Right cardiac atrium (tissue), 5 donors: ENCODE measurements at regions of chr11 and their contacts with region 1.

Region 1: DNA sequence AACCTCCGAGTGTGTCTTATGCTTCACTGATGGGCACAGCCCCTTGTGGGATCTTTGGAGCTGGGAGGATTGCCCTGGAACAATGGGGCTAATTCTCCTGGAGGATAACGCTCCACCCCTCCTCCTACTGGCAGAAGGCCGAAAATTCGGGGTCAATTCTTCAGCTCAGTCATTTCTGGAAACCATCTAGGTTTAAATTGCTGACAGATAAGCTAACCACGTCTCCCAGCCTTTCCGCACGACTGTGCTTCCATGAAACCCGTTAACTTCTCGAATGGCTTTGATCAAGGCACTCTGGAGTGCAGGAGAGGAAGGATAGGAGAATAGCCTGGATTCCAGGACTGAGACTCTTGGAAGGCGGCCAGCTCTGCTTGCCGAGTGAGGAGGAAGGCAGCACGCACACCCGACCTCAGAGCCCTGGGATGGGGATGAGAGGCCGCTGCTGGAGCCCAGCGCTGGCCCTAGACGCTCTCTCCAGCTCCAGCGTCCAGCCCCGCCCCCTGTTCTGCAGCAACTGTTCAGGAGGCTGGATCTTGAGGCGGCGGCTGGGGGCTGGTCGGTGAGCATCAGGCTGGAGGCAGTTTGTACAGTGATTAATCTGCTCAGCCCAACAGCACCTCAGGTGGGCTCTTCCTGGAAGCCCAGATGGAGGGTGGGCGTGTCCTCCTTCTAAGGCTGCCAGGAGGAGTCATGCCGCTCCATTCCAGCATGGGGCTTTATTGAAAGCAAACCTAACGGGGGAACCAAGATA is 176.7 kb upstream of the NCAM1 start:
- DNase-seq: peak; percentile 86 to 96 (median 95)
- ATAC-seq: peak; percentile 81 to 89
- H3K4me3 ChIP-seq: no peak overlapping the region
- H3K27ac ChIP-seq: peak overlapping the region; percentile 53
- H3K4me1 ChIP-seq: peaks cover 16% of the 10 kb centered on the region
- H3K27me3 ChIP-seq: no peaks in the 10 kb centered on the region

Region 2: GRCh38 chr11:112655371-112655770 is 129.1 kb before region 1 on chr11:
- intact Hi-C with region 1: loop called in 1 of 4 experiments (anchors 10 kb)
- DNase-seq: peak; percentile 85 to 95 (median 92)
- ATAC-seq: peak; percentile 73 to 81
- H3K4me3 ChIP-seq: no peak overlapping the region
- H3K27ac ChIP-seq: peak overlapping the region; percentile 42
- H3K4me1 ChIP-seq: peaks cover 8% of the 10 kb centered on the region
- H3K27me3 ChIP-seq: no peaks in the 10 kb centered on the region

Region 3: DNA sequence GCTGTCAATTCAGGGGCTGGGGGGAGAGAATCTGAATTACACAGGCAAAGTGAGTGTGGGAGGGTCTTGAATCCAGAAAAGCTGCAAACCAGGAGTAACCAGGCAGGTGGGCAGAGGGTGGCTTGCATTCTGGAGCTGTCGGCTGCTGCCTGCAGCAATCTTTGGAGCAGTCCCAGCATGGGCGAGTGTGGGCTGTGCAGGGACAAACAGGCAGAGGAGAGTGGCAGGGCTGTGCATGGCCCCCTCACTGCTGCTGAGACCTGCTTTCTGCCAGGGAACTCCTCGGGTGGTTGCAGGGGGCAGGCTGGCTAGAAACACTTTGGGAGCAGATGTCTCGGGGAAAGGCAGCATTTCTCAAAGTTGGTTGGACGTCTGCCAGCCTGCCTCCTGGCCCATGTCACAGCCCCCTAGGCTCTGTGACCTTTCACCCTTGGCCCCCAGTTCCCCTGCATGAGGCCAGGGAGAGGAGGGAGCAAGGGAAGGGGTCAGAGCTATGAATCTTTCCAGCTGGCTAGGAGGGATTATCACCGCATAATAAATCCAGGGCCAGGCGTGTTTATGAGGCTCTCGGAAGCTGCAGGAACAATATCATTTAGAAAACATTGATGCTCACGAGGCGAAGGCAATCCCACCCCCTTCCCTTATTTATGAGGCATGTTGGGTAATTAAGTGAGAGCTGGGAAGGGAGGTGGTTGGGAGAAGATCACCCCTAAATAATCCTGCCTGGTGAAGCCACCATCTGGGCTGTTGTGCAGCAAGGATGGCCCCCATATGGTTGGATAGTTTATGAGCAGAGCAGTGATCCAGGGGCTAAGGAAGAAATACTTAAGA is 35.6 kb before region 1 on chr11:
- intact Hi-C with region 1: no loop called
- DNase-seq: peak in 1 of 3 donors; percentile 63
- ATAC-seq: peak in 1 of 2 donors; percentile 18
- H3K4me3 ChIP-seq: no peak overlapping the region
- H3K27ac ChIP-seq: no peak overlapping the region
- H3K4me1 ChIP-seq: no peaks in the 10 kb centered on the region
- H3K27me3 ChIP-seq: no peaks in the 10 kb centered on the region

Region 4: DNA sequence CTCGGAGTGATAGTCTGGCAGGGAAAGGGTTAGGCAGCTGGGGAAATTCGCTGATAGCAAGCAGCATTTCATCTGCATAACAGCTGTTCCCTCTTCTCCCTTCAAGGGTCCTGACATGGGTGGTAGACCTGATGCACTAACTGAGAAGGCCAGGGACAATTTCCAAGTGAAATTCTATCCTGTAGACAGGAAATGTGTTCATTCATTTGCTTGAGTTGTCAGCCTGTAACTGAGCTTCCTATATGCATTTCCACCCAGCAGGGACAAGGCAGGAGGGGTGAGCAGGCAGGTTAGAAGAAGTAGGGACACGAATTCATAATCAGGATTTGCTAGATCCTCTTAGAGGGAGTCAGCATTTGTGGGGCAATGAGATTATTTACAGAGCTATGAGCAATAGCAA is 22.4 kb after region 1 on chr11:
- intact Hi-C with region 1: no loop called
- DNase-seq: no peak
- ATAC-seq: no peak
- H3K4me3 ChIP-seq: no peak overlapping the region
- H3K27ac ChIP-seq: no peak overlapping the region
- H3K4me1 ChIP-seq: no peaks in the 10 kb centered on the region
- H3K27me3 ChIP-seq: no peaks in the 10 kb centered on the region